Dorsolateral prefrontal cortex (tissue), 120 donors: ENCODE measurements at regions of chr7 and their contacts with region 1.

Region 1: GRCh38 chr7:44325811-44326241 is 432 bp upstream of the CAMK2B start:
- DNase-seq: no peak
- H3K4me3 ChIP-seq: peak overlapping the region in 43 of 59 donors; percentile 2 to 73 (median 38)
- H3K27ac ChIP-seq: peak overlapping the region in 27 of 59 donors; percentile 2 to 82 (median 46)
- H3K27me3 ChIP-seq: peaks cover 0 to 15% (median 0%) of the 10 kb centered on the region in 45 donors
- CTCF ChIP-seq: peak in 1 of 56 donors; percentile 12

Region 2: GRCh38 chr7:44259547-44260457 is 66.0 kb before region 1 on chr7:
- intact Hi-C with region 1: loop called in 1 of 2 experiments (anchors 10 kb)
- DNase-seq: peak in 8 of 10 donors; percentile 43 to 82 (median 64)
- H3K4me3 ChIP-seq: no peak overlapping the region
- H3K27ac ChIP-seq: peak overlapping the region in 55 of 59 donors; percentile 54 to 93 (median 76)
- H3K27me3 ChIP-seq: no peaks in the 10 kb centered on the region
- CTCF ChIP-seq: no peak